ENCODE measurements at regions of chr10 and their contacts with region 1.

Region 1: DNA sequence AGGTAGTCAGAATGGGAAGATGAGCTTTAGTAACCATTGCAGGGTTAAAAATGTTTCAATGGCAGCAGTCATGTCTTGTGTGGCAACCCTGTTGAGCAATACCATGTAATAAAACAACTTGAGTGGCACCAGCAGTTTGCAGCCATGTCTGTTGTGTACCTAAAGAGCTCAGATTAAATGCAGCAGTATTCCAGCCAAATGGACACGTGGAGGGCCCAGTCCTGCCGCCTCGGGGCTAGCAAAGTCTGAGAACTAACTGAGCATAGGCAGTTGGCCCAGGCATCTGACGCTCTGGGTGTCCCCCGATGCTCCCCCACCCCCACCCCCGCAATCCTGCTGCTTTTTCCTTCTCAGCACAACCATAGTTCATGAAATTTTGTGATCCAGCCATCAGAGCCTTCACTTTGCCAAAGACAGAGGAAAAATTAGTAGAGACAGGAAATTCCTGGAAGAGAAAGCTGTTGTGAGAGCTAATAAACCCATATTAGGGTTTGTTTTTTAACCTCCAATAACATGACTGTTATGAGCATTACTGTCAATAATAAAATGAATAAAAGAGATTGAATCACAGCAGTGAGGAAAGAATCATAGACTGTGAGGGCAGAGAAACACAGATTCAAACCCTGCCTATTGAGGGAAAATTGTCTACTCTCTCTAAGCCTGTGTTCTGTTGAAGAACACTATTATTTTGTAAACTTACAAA is 220.6 kb upstream of the RHOBTB1 start:
- DNase-seq: peak; percentile 91 to 92
- ATAC-seq: peak; percentile 84
- H3K4me3 ChIP-seq: peak overlapping the region in 1 of 4 donors; percentile 9
- H3K27ac ChIP-seq: peak overlapping the region; percentile 88 to 96 (median 92)
- H3K4me1 ChIP-seq: peaks cover 34 to 39% of the 10 kb centered on the region in 2 donors
- H3K27me3 ChIP-seq: no peaks in the 10 kb centered on the region
- CTCF ChIP-seq: no peak
- POLR2A ChIP-seq: no peak

Region 2: GRCh38 chr10:60140651-60141632 is 1023.7 kb before region 1 on chr10:
- in situ Hi-C with region 1: no loop called
- intact Hi-C with region 1: loop called (anchors 10 kb)
- DNase-seq: peak; percentile 67 to 70
- ATAC-seq: peak; percentile 86 to 89
- H3K4me3 ChIP-seq: peak overlapping the region; percentile 56 to 63 (median 60)
- H3K27ac ChIP-seq: peak overlapping the region; percentile 86 to 96 (median 89)
- H3K4me1 ChIP-seq: peaks cover 25 to 31% of the 10 kb centered on the region in 2 donors
- H3K27me3 ChIP-seq: no peaks in the 10 kb centered on the region
- CTCF ChIP-seq: no peak
- POLR2A ChIP-seq: peak; percentile 30 to 51

Region 3: DNA sequence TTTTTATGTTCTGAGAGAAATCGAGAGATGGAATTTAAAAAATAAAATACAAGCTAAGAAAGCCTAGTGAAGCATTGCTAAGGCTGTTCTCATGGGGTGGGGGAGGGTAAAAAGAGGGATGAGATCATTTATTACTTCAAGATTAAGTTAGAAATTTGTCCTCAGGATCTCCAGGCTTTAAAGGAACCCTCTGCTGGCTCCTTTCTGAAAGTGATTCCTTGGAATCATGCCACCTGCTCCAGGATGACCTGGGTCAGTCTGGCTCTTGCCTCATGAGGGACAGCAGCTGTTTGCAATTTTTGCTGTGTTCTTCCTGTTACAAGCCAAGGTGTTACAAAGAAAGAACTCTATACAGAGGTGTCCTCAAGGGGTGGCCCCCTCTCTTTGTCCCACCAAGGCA is 316.5 kb before region 1 on chr10:
- in situ Hi-C with region 1: no loop called
- intact Hi-C with region 1: loop called (anchors 2 kb)
- DNase-seq: peak; percentile 79 to 89
- ATAC-seq: peak; percentile 66 to 81
- H3K4me3 ChIP-seq: no peak overlapping the region
- H3K27ac ChIP-seq: peak overlapping the region; percentile 86 to 91 (median 88)
- H3K4me1 ChIP-seq: peaks cover 46 to 51% of the 10 kb centered on the region in 2 donors
- H3K27me3 ChIP-seq: no peaks in the 10 kb centered on the region
- CTCF ChIP-seq: peak in 4 of 5 experiments; percentile 15 to 49 (median 38)
- POLR2A ChIP-seq: no peak

Region 4: DNA sequence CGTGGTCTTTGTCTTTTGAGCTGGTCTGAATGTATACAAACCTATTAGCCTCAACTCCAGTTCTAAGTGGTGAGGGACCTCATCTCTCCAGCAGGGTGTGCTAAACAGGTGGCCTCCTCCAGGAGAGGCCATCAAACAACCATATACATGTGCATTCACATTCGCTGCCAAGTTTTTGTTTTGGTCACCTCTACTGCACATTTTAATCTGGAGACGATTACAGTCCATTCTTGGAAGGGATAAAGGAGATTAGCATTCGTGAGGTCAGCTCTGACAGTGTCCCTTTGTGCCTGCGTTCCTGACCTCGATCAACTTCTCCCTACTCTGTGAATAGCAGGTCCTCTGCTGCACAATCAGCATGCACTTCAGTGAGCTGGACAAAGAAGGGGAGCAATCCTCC is 281.4 kb before region 1 on chr10:
- in situ Hi-C with region 1: no loop called
- intact Hi-C with region 1: no loop called
- DNase-seq: no peak
- ATAC-seq: no peak
- H3K4me3 ChIP-seq: no peak overlapping the region
- H3K27ac ChIP-seq: peak overlapping the region; percentile 59 to 96 (median 88)
- H3K4me1 ChIP-seq: peaks cover 37 to 56% of the 10 kb centered on the region in 2 donors
- H3K27me3 ChIP-seq: no peaks in the 10 kb centered on the region
- CTCF ChIP-seq: peak; percentile 36 to 60 (median 36)
- POLR2A ChIP-seq: no peak

Region 5: GRCh38 chr10:61040399-61041016 is 124.1 kb before region 1 on chr10:
- in situ Hi-C with region 1: no loop called
- intact Hi-C with region 1: no loop called
- DNase-seq: no peak
- ATAC-seq: no peak
- H3K4me3 ChIP-seq: no peak overlapping the region
- H3K27ac ChIP-seq: no peak overlapping the region
- H3K4me1 ChIP-seq: no peaks in the 10 kb centered on the region
- H3K27me3 ChIP-seq: no peaks in the 10 kb centered on the region
- CTCF ChIP-seq: no peak
- POLR2A ChIP-seq: no peak

Region 6: DNA sequence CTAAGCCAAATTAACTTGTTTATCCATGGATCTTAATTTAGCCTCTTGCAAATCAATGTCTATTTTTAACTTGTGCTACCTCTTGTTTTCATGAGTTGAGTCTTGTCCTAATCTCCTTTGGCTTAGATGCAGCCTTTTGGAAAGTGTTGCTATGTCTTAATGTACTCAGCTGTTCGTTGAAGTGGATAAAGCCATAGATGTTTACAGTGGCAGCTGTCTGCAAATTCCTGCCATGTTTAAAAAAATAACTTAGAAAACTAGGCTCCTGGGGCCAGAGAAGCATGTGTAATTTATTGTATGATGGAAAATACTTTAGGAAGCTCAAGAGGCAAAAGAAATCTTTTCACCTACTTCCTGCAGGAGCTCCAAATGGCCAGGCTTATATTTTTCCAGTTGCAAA is 32.4 kb after region 1 on chr10:
- in situ Hi-C with region 1: no loop called
- intact Hi-C with region 1: loop called (anchors 2 kb)
- DNase-seq: no peak
- ATAC-seq: peak in 1 of 2 donors; percentile 99
- H3K4me3 ChIP-seq: no peak overlapping the region
- H3K27ac ChIP-seq: peak overlapping the region in 3 of 4 donors; percentile 34 to 70 (median 65)
- H3K4me1 ChIP-seq: peaks cover 16% of the 10 kb centered on the region in 2 donors
- H3K27me3 ChIP-seq: no peaks in the 10 kb centered on the region
- CTCF ChIP-seq: no peak
- POLR2A ChIP-seq: no peak

Region 7: DNA sequence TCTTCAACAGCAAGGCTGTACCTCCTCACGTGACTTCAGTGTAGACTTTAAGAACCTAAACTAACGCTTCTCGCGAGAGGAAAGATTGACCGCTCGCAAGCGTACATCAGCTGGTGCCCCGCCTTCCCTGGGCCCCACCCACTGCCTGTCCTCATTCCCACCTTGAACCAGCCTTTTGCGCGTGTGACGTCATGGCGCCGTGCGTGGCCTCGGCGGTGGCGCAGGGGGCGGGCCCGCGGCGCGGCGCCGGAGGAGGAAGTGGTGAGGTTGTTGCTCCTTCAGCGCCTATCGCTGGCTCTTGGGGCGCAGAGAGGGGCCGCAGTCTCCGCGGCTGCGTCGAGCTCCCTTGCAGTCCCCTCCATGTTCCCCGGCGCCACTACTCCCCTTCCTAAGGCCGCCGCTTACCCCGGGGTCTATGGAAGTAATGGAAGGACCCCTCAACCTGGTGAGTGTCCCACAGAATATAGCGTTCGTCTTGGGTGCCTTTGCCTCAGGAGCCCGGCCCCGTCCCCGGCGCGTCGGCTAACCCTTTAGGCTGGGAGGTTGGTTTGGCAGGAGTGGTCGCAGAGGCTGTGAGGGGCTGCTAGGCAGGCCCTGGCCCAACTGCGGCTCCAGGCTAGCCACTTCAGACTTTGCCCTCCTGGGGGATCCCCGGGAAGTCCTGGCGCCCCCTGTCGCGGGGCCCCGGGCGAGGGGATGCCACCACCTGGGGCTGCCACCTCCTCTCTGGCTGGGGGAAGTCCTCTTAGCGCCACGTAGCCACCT is 1968.6 kb after region 1 on chr10 and contains the start of gene NRBF2:
- in situ Hi-C with region 1: no loop called
- intact Hi-C with region 1: loop called (anchors 10 kb)
- DNase-seq: peak; percentile 94 to 98
- ATAC-seq: peak; percentile 90 to 95
- H3K4me3 ChIP-seq: peak within 1 kb of the TSS; percentile 64 to 94 (median 84)
- H3K27ac ChIP-seq: peak within 1 kb of the TSS; percentile 90 to 96 (median 96)
- H3K4me1 ChIP-seq: peaks cover 33 to 36% of the 10 kb centered on the region in 2 donors
- H3K27me3 ChIP-seq: no peaks in the 10 kb centered on the region
- CTCF ChIP-seq: peak in 2 of 5 experiments; percentile 19 to 31
- POLR2A ChIP-seq: peak; percentile 97 to 99
- total RNA-seq, gene NRBF2: 10.2 to 29.2 (median 13.3) TPM

Measured in gastrocnemius medialis (tissue), 4 donors.